ENCODE measurements at regions of chr18 and their contacts with region 1.

Region 1: GRCh38 chr18:79378542-79379250 is 17.0 kb upstream of the NFATC1 start:
- DNase-seq: peak; percentile 84 to 94
- ATAC-seq: peak; percentile 89
- H3K4me3 ChIP-seq: no peak overlapping the region
- H3K27ac ChIP-seq: no peak overlapping the region
- H3K4me1 ChIP-seq: no peaks in the 10 kb centered on the region
- H3K27me3 ChIP-seq: no peaks in the 10 kb centered on the region

Region 2: GRCh38 chr18:79422022-79422782 is 43.5 kb after region 1 on chr18:
- intact Hi-C with region 1: no loop called
- DNase-seq: no peak
- ATAC-seq: no peak
- H3K4me3 ChIP-seq: no peak overlapping the region
- H3K27ac ChIP-seq: no peak overlapping the region
- H3K4me1 ChIP-seq: no peaks in the 10 kb centered on the region
- H3K27me3 ChIP-seq: no peaks in the 10 kb centered on the region

Region 3: GRCh38 chr18:79528846-79529245 is 150.2 kb after region 1 on chr18:
- intact Hi-C with region 1: loop called (anchors 1 to 2 kb)
- DNase-seq: peak; percentile 60 to 81
- ATAC-seq: peak; percentile 44
- H3K4me3 ChIP-seq: no peak overlapping the region
- H3K27ac ChIP-seq: no peak overlapping the region
- H3K4me1 ChIP-seq: no peaks in the 10 kb centered on the region
- H3K27me3 ChIP-seq: no peaks in the 10 kb centered on the region

Region 4: GRCh38 chr18:79599441-79599931 is 220.8 kb after region 1 on chr18:
- intact Hi-C with region 1: no loop called
- DNase-seq: peak in 1 of 2 donors; percentile 61
- ATAC-seq: no peak
- H3K4me3 ChIP-seq: no peak overlapping the region
- H3K27ac ChIP-seq: no peak overlapping the region
- H3K4me1 ChIP-seq: no peaks in the 10 kb centered on the region
- H3K27me3 ChIP-seq: no peaks in the 10 kb centered on the region

Region 5: GRCh38 chr18:79644006-79644665 is 265.4 kb after region 1 on chr18:
- intact Hi-C with region 1: loop called (anchors 1 kb)
- DNase-seq: peak in 1 of 2 donors; percentile 72
- ATAC-seq: peak; percentile 87
- H3K4me3 ChIP-seq: no peak overlapping the region
- H3K27ac ChIP-seq: no peak overlapping the region
- H3K4me1 ChIP-seq: no peaks in the 10 kb centered on the region
- H3K27me3 ChIP-seq: no peaks in the 10 kb centered on the region

Region 6: DNA sequence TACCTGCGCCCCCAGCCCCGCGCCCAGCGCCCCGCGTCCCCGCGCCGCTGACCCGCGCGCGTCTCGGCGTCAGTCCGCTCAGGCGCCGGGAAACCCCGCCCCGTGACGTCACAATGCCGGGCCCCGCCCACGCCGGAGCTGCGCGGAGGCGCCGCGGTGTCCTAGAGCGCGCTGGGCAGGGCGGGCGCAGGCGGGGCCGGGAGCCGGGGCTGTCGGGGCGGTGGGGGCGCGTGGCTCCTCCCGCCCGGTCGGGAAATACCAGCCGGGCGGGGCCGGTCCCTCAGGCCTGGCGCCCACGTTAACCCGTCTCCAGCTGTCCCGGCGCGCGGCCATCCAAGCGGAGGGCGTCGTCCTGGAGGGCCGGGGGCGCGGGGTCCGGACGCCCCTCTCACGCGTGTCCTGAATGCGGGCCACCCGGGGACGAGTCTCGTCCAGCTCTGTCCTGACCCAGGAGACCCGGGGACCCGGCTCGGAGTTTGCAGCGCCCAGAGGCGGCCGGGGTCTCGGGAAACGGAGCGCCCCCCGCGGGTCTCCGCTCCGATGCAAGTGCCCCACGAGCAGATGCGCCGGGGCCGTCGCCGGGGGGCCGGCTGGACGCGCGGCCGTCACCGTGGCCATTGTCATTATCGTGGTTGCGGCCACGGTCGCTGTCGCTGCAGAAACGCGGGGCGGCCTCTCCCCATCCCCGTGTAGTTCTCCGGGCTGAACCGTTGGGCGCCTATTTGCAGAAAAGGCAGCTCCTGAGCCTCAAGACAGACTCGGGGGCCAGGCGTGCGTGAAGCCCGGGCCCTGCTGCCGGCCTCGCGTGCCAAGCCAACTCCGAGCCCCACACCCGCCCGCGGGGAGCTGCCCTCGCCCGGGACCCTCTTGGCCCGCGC is 573.1 kb after region 1 on chr18 and contains the start of gene SLC66A2:
- intact Hi-C with region 1: loop called in 1 of 2 experiments (anchors 10 kb)
- DNase-seq: peak; percentile 95 to 99
- ATAC-seq: peak; percentile 96
- H3K4me3 ChIP-seq: peak within 1 kb of the TSS; percentile 85 to 95
- H3K27ac ChIP-seq: no peak within 1 kb of the TSS
- H3K4me1 ChIP-seq: peaks cover 0 to 3% of the 10 kb centered on the region in 2 donors
- H3K27me3 ChIP-seq: no peaks in the 10 kb centered on the region
- total RNA-seq, gene SLC66A2: 40.1 to 47.7 TPM